Prostate gland (tissue), 2 donors: ENCODE measurements at regions of chr3 and their contacts with region 1.

Region 1: GRCh38 chr3:149812606-149813366 is at the start of gene RNF13:
- DNase-seq: peak; percentile 98
- H3K4me3 ChIP-seq: peak within 1 kb of the TSS; percentile 62 to 82
- H3K27ac ChIP-seq: peak within 1 kb of the TSS; percentile 96 to 97
- H3K4me1 ChIP-seq: no peaks in the 10 kb centered on the region
- H3K27me3 ChIP-seq: no peaks in the 10 kb centered on the region
- CTCF ChIP-seq: no peak
- POLR2A ChIP-seq: peak; percentile 66
- total RNA-seq, gene RNF13: 77.3 to 105 TPM

Region 2: DNA sequence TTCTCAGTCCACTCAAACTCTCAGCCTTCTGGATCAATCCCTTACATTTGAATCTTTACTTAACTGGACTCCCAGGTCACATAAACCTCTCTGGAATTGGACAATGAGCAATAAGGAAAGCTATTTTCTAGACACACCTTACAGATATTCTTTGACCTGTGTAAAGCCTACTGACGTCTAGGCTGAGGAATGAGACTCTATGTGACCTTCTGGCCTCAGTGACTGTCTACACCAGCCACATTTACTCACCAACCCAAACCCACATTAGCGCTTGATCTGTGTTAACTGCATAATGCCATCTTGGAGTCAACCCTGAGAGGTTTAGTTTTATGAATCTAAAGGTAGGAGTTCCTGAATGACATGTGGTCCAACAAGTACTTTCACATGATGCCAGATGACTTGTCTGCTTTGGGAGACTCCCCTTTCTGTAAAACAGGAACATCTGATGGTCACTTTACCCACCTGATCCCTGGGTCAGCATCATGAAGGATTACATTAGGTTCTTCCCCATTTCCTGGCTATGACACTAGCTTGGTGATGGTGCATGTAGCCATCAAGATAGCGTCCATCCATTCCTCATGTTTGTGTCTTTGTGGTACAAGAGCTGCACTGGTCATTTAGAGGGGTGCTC is 49.1 kb before region 1 on chr3:
- intact Hi-C with region 1: loop called (anchors 5 kb)
- DNase-seq: no peak
- H3K4me3 ChIP-seq: no peak overlapping the region
- H3K27ac ChIP-seq: no peak overlapping the region
- H3K4me1 ChIP-seq: no peaks in the 10 kb centered on the region
- H3K27me3 ChIP-seq: no peaks in the 10 kb centered on the region
- CTCF ChIP-seq: no peak
- POLR2A ChIP-seq: no peak